Prostate gland (tissue), 2 donors: ENCODE measurements at regions of chr7 and their contacts with region 1.

Region 1: GRCh38 chr7:112398534-112398933 is 51.7 kb upstream of the IFRD1 start:
- DNase-seq: no peak
- H3K4me3 ChIP-seq: no peak overlapping the region
- H3K27ac ChIP-seq: no peak overlapping the region
- H3K4me1 ChIP-seq: no peaks in the 10 kb centered on the region
- H3K27me3 ChIP-seq: no peaks in the 10 kb centered on the region
- CTCF ChIP-seq: no peak
- POLR2A ChIP-seq: no peak

Region 2: DNA sequence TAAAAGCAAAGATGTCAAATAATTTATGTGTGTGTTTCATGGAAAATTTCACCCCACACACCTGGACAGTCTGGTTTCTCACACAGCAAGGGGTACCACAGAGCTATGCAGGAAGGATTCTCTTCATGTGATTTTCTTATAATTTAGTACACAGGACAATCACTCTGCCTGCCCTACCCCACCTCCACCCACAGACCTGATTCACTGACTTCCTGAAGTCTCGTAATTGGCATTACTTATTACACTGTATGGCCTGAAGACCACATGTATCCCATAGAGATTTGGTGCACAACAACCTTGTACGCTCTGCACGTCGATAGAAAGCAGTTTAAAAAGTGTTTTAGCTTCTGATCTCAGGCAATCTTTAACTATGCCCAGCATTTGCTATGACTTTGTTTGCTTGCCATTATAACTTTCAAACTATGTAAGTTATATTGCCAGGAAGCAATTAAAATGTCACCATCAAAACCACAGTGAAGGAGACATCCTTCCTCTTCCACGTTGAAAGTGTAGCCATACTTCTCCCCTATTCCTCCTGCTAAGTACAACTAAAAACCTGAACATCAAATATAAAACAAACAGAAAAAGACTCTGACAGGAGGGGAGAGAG is 556.8 kb before region 1 on chr7:
- intact Hi-C with region 1: loop called (anchors 10 kb)
- DNase-seq: no peak
- H3K4me3 ChIP-seq: no peak overlapping the region
- H3K27ac ChIP-seq: no peak overlapping the region
- H3K4me1 ChIP-seq: no peaks in the 10 kb centered on the region
- H3K27me3 ChIP-seq: no peaks in the 10 kb centered on the region
- CTCF ChIP-seq: no peak
- POLR2A ChIP-seq: no peak

Region 3: GRCh38 chr7:111867348-111867931 is 531.1 kb before region 1 on chr7:
- intact Hi-C with region 1: loop called (anchors 10 kb)
- DNase-seq: no peak
- H3K4me3 ChIP-seq: no peak overlapping the region
- H3K27ac ChIP-seq: no peak overlapping the region
- H3K4me1 ChIP-seq: no peaks in the 10 kb centered on the region
- H3K27me3 ChIP-seq: no peaks in the 10 kb centered on the region
- CTCF ChIP-seq: no peak
- POLR2A ChIP-seq: no peak

Region 4: GRCh38 chr7:112584290-112584689 is 185.8 kb after region 1 on chr7:
- intact Hi-C with region 1: no loop called
- DNase-seq: no peak
- H3K4me3 ChIP-seq: no peak overlapping the region
- H3K27ac ChIP-seq: no peak overlapping the region
- H3K4me1 ChIP-seq: no peaks in the 10 kb centered on the region
- H3K27me3 ChIP-seq: no peaks in the 10 kb centered on the region
- CTCF ChIP-seq: no peak
- POLR2A ChIP-seq: no peak